ENCODE measurements at regions of chr10 and their contacts with region 1.

Region 1: GRCh38 chr10:95246579-95247051 is 44.2 kb downstream of the PDLIM1 start:
- DNase-seq: peak; percentile 81
- H3K4me3 ChIP-seq: no peak overlapping the region
- H3K27ac ChIP-seq: peak overlapping the region in 3 of 4 donors; percentile 14 to 59 (median 27)
- H3K4me1 ChIP-seq: peaks cover 0 to 14% (median 9%) of the 10 kb centered on the region in 4 donors
- H3K27me3 ChIP-seq: no peaks in the 10 kb centered on the region
- CTCF ChIP-seq: peak; percentile 31 to 82 (median 68)
- EP300 ChIP-seq: no peak
- POLR2A ChIP-seq: no peak

Region 2: DNA sequence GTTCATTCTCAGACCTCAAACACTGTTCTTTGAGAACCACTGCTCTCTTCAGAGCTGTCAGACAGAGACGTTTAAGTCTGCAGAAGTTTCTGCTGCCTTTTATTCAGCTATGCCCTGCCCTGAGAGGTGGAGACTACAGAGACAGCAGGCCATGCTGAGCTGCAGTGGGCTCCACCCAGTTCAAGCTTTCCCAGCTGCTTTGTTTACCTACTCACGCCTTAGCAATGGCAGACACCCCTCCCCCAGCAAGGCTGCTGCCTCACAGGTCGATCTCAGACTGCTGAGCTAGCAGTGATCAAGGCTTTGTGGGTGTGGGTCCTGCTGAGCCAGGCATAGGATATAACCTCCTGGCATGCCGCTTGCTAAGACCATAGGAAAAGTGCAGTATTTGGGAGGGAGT is 388.6 kb before region 1 on chr10:
- intact Hi-C with region 1: no loop called
- DNase-seq: no peak
- H3K4me3 ChIP-seq: no peak overlapping the region
- H3K27ac ChIP-seq: no peak overlapping the region
- H3K4me1 ChIP-seq: no peaks in the 10 kb centered on the region
- H3K27me3 ChIP-seq: no peaks in the 10 kb centered on the region
- CTCF ChIP-seq: no peak
- EP300 ChIP-seq: no peak
- POLR2A ChIP-seq: no peak

Region 3: DNA sequence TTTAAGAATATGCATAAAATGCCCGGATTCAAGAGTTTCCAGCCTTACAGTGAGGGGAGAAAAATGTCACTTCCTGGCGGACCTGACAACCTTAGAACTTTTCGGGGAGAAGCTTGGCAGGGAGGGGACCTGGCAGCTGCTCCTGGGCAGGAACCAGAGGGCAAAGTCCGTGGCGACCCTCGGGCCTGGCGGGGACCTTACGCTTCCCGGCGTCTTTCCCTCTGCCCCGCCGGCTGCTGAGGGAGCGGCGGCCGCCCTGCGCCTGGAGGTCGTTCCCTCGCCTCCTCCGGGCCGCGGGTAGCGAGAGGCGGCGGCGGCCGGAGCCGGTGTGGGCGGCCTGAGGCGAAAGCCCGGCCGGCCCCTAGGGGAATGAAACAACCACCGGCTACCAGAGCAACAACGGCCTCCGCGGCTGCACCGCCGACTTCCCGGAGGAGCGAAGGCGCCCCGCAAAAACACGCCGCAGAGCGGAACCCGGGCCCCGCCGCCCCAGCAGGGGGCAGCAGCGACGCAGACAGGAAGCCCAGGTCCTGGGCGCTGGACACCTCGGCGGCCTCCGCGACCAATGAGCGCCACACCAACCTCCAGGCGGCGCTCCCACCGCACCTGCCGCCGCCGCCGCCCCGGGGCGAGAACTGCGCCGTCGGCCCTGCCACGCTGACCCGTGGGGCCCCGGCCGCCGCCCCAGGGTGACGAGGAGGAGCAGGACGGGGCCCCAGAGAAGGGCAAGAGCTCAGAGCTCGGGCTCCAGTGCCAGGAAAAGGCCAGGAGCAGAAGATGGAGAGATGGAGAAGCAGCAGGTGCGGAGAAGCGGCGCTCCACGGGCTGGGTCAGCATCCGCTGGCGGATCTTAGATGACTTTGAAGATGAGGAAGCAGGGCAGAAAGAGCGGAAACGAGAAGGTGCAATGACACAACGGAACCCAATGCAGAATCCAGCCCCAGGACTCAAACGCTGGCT is 63.1 kb before region 1 on chr10:
- intact Hi-C with region 1: loop called (anchors 2 kb)
- DNase-seq: peak; percentile 87
- H3K4me3 ChIP-seq: peak overlapping the region; percentile 46 to 70 (median 56)
- H3K27ac ChIP-seq: peak overlapping the region; percentile 74 to 83 (median 81)
- H3K4me1 ChIP-seq: peaks cover 0 to 13% (median 8%) of the 10 kb centered on the region in 4 donors
- H3K27me3 ChIP-seq: peaks cover 0 to 4% (median 0%) of the 10 kb centered on the region in 3 donors
- CTCF ChIP-seq: peak; percentile 34 to 83 (median 49)
- EP300 ChIP-seq: no peak
- POLR2A ChIP-seq: no peak

Region 4: DNA sequence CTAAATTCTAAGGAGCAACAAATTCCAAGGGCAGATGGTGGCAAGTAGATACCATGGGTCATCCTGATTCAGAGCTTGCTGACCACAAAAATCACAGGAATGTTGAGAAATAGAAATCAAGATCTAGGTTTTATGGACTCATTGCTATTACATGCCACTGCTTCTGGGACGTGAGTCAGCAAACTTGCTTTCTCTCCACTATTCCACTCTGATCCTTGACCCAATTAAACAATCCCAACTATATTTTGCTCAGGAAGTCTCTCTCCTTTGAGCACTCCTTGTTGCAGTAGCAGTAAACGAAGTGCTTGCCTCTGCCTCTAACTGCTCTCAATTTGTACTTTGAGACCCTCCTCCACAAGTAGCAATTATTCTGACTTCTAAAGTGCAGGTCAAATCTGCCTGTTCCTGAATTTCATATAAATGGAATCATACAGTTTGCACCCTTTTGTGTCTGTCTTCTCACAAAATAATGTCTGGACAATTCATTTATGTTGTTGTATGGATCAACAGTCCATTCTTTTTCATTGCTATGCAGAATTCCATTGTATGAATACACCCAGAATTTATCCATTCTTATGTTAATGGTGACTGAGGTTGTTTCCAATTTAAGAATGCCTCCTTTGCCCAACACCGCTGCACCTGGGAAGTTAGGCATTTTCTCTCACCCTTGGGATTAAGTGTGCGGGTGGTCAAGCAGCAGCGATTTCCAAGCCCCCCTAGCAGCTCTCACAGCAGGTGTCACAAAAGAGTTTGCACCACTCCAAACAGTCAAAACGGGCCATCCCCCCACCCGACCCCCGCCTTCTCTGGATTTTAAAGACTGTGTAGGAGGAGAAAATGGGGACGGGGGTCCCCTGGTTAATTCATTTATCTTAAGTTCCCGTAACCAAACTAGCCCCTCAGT is 16.6 kb before region 1 on chr10:
- intact Hi-C with region 1: no loop called
- DNase-seq: no peak
- H3K4me3 ChIP-seq: peak overlapping the region in 3 of 4 donors; percentile 30 to 56 (median 43)
- H3K27ac ChIP-seq: no peak overlapping the region
- H3K4me1 ChIP-seq: peaks cover 0 to 13% (median 0%) of the 10 kb centered on the region in 4 donors
- H3K27me3 ChIP-seq: no peaks in the 10 kb centered on the region
- CTCF ChIP-seq: no peak
- EP300 ChIP-seq: no peak
- POLR2A ChIP-seq: no peak

Region 5: GRCh38 chr10:95290461-95291364 is 44.1 kb after region 1 on chr10 and contains the start of gene PDLIM1:
- intact Hi-C with region 1: loop called (anchors 5 kb)
- DNase-seq: peak; percentile 82
- H3K4me3 ChIP-seq: peak within 1 kb of the TSS; percentile 68 to 86 (median 70)
- H3K27ac ChIP-seq: peak within 1 kb of the TSS; percentile 68 to 81 (median 75)
- H3K4me1 ChIP-seq: peaks cover 0 to 50% (median 9%) of the 10 kb centered on the region in 4 donors
- H3K27me3 ChIP-seq: peaks cover 0 to 23% (median 5%) of the 10 kb centered on the region in 3 donors
- CTCF ChIP-seq: peak in 2 of 4 experiments; percentile 18 to 32
- EP300 ChIP-seq: no peak
- POLR2A ChIP-seq: peak in 1 of 2 donors; percentile 56
- total RNA-seq, gene PDLIM1: 27.8 to 75.3 (median 43.9) TPM

Region 6: DNA sequence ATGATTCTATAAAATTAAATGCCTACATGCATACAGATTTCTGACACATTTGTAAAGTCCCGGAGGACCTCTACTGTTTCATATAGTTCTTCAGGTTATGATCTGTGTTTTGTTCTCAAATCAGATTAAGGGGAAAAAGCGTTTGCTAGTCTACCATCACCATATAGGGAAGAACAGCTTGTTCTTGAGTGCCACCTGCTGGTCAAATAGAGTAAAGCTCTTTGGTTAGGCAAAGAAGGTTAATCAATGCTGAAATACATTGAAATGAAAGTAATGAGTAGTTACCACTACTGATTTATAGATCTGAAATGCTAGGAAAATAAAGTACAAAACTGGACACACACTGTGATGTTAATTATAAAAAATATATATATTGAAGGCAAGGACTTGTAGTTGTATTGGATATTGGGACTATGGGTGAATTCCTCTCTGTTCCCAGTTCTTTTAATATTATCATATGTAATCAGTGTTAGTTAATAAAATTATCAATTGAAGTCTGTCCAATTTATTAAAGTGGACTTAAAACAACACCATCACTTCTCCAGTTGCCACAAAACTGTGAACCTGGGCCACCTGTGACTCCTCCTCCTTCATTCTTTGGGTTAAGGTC is 116.8 kb after region 1 on chr10:
- intact Hi-C with region 1: loop called (anchors 1 kb)
- DNase-seq: no peak
- H3K4me3 ChIP-seq: no peak overlapping the region
- H3K27ac ChIP-seq: peak overlapping the region; percentile 41 to 67 (median 63)
- H3K4me1 ChIP-seq: peaks cover 0 to 73% (median 65%) of the 10 kb centered on the region in 4 donors
- H3K27me3 ChIP-seq: no peaks in the 10 kb centered on the region
- CTCF ChIP-seq: peak; percentile 25 to 86 (median 84)
- EP300 ChIP-seq: no peak
- POLR2A ChIP-seq: no peak